Activated B cell treated with CpG ODN at 0.5 μM for 24 hours (primary cell): ENCODE measurements at regions of chr2 and their contacts with region 1.

Region 1: DNA sequence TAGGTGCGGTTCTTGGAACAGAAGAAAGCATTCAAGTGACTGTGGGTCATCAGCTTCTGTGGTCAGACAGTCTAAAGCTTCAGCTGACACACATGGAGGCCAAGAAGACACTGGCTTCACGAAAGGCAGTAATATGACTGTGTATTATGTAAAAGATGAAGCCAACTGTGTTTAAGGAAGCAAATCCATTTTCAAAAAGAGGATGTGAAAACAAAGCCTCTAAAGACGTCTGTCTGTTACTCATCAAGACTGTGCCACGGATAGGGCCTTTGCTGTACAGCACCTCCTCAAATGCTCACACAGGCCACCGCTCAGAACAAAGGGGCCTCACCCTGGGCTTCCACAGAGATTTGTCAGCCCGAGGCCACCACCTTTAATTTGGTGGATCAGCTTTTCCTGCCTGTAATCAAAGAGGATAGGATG is 21.1 kb upstream of the TMEM163 start:
- DNase-seq: peak; percentile 62
- ATAC-seq: peak; percentile 88
- H3K4me3 Mint-ChIP-seq: peak overlapping the region; percentile 49
- H3K27ac Mint-ChIP-seq: peak overlapping the region; percentile 97
- H3K4me1 Mint-ChIP-seq: peaks cover 71% of the 10 kb centered on the region
- H3K27me3 Mint-ChIP-seq: no peaks in the 10 kb centered on the region
- CTCF ChIP-seq: no peak

Region 2: GRCh38 chr2:134261398-134262131 is 478.3 kb before region 1 on chr2:
- CTCF ChIA-PET with region 1: no interaction called
- POLR2A ChIA-PET with region 1: no interaction called
- intact Hi-C with region 1: loop called (anchors 5 kb)
- DNase-seq: no peak
- ATAC-seq: peak; percentile 66
- H3K4me3 Mint-ChIP-seq: peak overlapping the region; percentile 38
- H3K27ac Mint-ChIP-seq: peak overlapping the region; percentile 97
- H3K4me1 Mint-ChIP-seq: peaks cover 91% of the 10 kb centered on the region
- H3K27me3 Mint-ChIP-seq: no peaks in the 10 kb centered on the region
- CTCF ChIP-seq: no peak

Region 3: DNA sequence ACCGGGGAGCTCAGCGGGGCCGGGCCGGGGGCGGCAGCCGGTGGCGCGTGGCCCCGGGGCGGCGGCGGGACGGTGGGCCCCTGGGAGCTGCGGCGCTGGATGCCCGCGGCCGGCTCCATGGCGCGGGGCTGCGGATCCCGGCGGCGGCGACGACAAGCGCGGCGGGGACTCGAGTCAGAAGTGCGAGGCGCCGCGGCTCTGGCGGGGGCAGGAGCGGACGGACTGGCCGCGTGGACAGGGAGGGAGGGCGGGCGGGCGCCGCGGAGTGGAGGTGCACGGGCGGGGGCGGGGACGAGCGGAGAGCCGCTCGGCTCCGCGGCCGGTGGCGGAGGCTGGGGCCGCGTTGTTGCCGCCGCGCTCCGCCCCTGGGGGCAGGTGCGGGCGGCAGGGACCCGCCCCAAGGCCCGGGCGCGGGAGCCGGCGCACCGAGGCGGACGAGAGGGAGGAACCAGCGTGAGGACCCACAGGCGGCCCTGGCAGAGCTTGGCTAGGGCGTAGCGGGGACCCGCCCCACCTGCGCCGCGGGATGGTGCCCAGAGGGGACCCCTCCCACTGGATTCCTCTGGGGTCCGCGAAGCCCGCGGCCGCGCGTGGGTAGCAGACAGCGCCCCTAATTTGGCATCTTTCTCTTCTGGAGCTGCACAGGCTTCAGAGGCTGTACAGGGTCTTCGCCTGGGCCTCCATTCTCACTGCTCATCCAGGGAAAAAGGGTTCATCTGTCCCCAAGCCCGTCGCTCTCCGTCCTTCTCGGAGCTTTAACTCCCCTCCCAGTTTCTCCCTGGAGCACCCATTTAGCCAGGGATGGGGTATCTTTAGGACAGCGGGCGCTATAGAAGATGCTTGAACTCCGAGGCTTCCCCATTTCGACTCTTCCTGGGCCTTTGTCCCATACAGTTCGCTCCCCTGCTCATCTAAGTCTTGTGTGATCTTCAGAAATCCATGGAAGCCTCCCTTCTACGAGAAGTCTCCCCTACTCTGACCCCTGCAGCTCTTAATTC is 20.8 kb before region 1 on chr2 and contains the start of gene TMEM163:
- CTCF ChIA-PET with region 1: interaction called, 3 read pairs
- POLR2A ChIA-PET with region 1: interaction called, 33 read pairs
- intact Hi-C with region 1: loop called (anchors 1 kb)
- DNase-seq: peak; percentile 56
- ATAC-seq: peak; percentile 84
- H3K4me3 Mint-ChIP-seq: peak within 1 kb of the TSS; percentile 85
- H3K27ac Mint-ChIP-seq: peak within 1 kb of the TSS; percentile 32
- H3K4me1 Mint-ChIP-seq: peaks cover 22% of the 10 kb centered on the region
- H3K27me3 Mint-ChIP-seq: peaks cover 21% of the 10 kb centered on the region
- CTCF ChIP-seq: no peak
- total RNA-seq, gene TMEM163: 4.4 and 6.0 TPM in 2 replicates

Region 4: GRCh38 chr2:134782792-134783191 is 42.9 kb after region 1 on chr2:
- CTCF ChIA-PET with region 1: interaction called, 3 read pairs
- POLR2A ChIA-PET with region 1: no interaction called
- intact Hi-C with region 1: loop called (anchors 1 kb)
- DNase-seq: no peak
- ATAC-seq: peak; percentile 66
- H3K4me3 Mint-ChIP-seq: no peak overlapping the region
- H3K27ac Mint-ChIP-seq: no peak overlapping the region
- H3K4me1 Mint-ChIP-seq: peaks cover 8% of the 10 kb centered on the region
- H3K27me3 Mint-ChIP-seq: no peaks in the 10 kb centered on the region
- CTCF ChIP-seq: peak; percentile 47

Region 5: GRCh38 chr2:134818321-134818720 is 78.4 kb after region 1 on chr2:
- CTCF ChIA-PET with region 1: no interaction called
- POLR2A ChIA-PET with region 1: no interaction called
- intact Hi-C with region 1: no loop called
- DNase-seq: no peak
- ATAC-seq: no peak
- H3K4me3 Mint-ChIP-seq: no peak overlapping the region
- H3K27ac Mint-ChIP-seq: no peak overlapping the region
- H3K4me1 Mint-ChIP-seq: no peaks in the 10 kb centered on the region
- H3K27me3 Mint-ChIP-seq: peaks cover 8% of the 10 kb centered on the region
- CTCF ChIP-seq: no peak

Region 6: DNA sequence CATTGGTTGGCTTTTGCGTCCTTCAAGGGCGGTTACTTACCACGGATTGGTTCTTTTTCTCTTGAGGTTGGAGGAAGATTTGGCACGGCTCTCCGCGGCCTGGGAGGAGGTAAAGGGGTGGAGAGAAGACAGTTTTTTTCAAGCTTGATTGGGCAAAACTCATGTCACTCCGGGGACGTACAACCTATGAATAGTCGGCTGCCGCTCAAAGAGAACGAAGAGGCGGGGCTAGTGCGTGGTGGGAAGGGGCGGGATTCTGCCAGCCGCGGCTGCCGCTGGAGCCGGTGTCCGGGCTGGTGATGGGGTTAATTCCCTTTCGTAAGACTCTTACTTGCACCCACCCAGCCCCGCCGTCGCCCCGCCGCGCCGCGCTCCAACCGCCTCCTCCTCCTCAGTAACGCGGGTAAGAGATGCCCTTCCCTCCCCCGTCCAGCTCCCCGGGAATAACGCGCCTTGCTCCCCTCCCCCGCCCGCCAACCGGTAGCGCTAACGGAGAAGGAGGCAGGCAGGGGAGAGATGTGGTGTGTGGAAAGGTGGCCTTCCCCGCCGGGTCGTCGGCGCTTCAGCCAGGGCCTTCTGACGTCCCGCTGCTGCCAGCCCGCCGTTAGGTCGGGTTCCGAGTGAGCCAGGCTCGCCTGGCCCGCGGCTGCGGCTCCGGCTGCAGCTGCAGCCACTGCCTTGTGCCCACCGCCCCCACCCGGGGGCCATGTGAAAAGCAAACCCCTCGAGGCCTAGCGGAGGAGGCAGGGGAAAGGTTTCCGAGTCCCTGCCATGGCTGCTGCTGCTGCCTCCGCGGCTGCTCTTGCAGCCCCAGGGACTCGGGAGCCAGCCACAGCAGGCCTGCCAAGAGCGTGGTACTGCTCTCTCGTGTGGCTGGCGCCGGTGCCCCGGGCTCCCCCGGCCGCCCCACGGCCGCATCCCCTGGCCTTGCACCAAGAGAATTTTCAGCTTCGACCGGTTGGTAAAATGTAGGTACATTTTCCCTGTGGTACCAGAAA is 791.6 kb after region 1 on chr2 and contains the start of gene R3HDM1:
- CTCF ChIA-PET with region 1: no interaction called
- POLR2A ChIA-PET with region 1: no interaction called
- intact Hi-C with region 1: loop called (anchors 10 kb)
- DNase-seq: peak; percentile 82
- ATAC-seq: peak; percentile 81
- H3K4me3 Mint-ChIP-seq: no peak within 1 kb of the TSS
- H3K27ac Mint-ChIP-seq: peak within 1 kb of the TSS; percentile 68
- H3K4me1 Mint-ChIP-seq: peaks cover 18% of the 10 kb centered on the region
- H3K27me3 Mint-ChIP-seq: no peaks in the 10 kb centered on the region
- CTCF ChIP-seq: no peak
- total RNA-seq, gene R3HDM1: 49.8 and 54.8 TPM in 2 replicates